Ascending aorta (tissue), 2 donors: ENCODE measurements at regions of chr10 and their contacts with region 1.

Region 1: GRCh38 chr10:103685880-103686669 is 169.3 kb downstream of the SH3PXD2A start:
- DNase-seq: peak in 1 of 2 donors; percentile 89
- H3K4me3 ChIP-seq: no peak overlapping the region
- H3K27ac ChIP-seq: no peak overlapping the region
- H3K4me1 ChIP-seq: no peaks in the 10 kb centered on the region
- H3K27me3 ChIP-seq: no peaks in the 10 kb centered on the region
- CTCF ChIP-seq: peak; percentile 92 to 98 (median 95)

Region 2: GRCh38 chr10:103598654-103599115 is 87.4 kb before region 1 on chr10:
- intact Hi-C with region 1: loop called (anchors 1 kb)
- DNase-seq: no peak
- H3K4me3 ChIP-seq: no peak overlapping the region
- H3K27ac ChIP-seq: no peak overlapping the region
- H3K4me1 ChIP-seq: peaks cover 0 to 11% of the 10 kb centered on the region in 2 donors
- H3K27me3 ChIP-seq: no peaks in the 10 kb centered on the region
- CTCF ChIP-seq: peak; percentile 53 to 71 (median 63)

Region 3: GRCh38 chr10:103605359-103606095 is 80.5 kb before region 1 on chr10:
- intact Hi-C with region 1: loop called (anchors 1 kb)
- DNase-seq: peak in 1 of 2 donors; percentile 89
- H3K4me3 ChIP-seq: no peak overlapping the region
- H3K27ac ChIP-seq: no peak overlapping the region
- H3K4me1 ChIP-seq: peaks cover 0 to 8% of the 10 kb centered on the region in 2 donors
- H3K27me3 ChIP-seq: no peaks in the 10 kb centered on the region
- CTCF ChIP-seq: peak; percentile 88 to 93 (median 91)